ENCODE measurements at regions of chrX and their contacts with region 1.

Region 1: GRCh38 chrX:102899940-102900916 is 36.8 kb upstream of the RAB40AL start:
- DNase-seq: peak; percentile 45
- H3K4me3 ChIP-seq: no peak overlapping the region; a peak in 1 of 4 replicates
- H3K27ac ChIP-seq: no peak overlapping the region
- H3K4me1 ChIP-seq: no peaks in the 10 kb centered on the region; a peak in 1 of 4 replicates
- H3K27me3 ChIP-seq: no peaks in the 10 kb centered on the region
- CTCF ChIP-seq: peak; percentile 80
- EP300 ChIP-seq: no peak
- RAD21 ChIP-seq: peak; percentile 71

Region 2: GRCh38 chrX:102863735-102864134 is 36.5 kb before region 1 on chrX:
- CTCF ChIA-PET with region 1: interaction called, 11 read pairs
- POLR2A ChIA-PET with region 1: no interaction called
- DNase-seq: peak; percentile 65
- H3K4me3 ChIP-seq: no peak overlapping the region
- H3K27ac ChIP-seq: no peak overlapping the region
- H3K4me1 ChIP-seq: peaks cover 0 to 5% of the 10 kb centered on the region in 2 experiments; a peak in 1 of 4 replicates
- H3K27me3 ChIP-seq: no peaks in the 10 kb centered on the region
- CTCF ChIP-seq: peak; percentile 98
- EP300 ChIP-seq: no peak
- RAD21 ChIP-seq: peak; percentile 89

Region 3: GRCh38 chrX:102883176-102883915 is 16.9 kb before region 1 on chrX:
- CTCF ChIA-PET with region 1: interaction called, 41 read pairs
- POLR2A ChIA-PET with region 1: no interaction called
- DNase-seq: no peak
- H3K4me3 ChIP-seq: no peak overlapping the region
- H3K27ac ChIP-seq: no peak overlapping the region
- H3K4me1 ChIP-seq: no peaks in the 10 kb centered on the region
- H3K27me3 ChIP-seq: no peaks in the 10 kb centered on the region
- CTCF ChIP-seq: no peak
- EP300 ChIP-seq: no peak
- RAD21 ChIP-seq: no peak